Activated CD8-positive, alpha-beta memory T cell treated with anti-CD3 and anti-CD28 coated beads, Interleukin-2, amount 10 ng/mL, durations not matched to agents 7 days and 5 days (primary cell): ENCODE measurements at regions of chr12 and their contacts with region 1.

Region 1: GRCh38 chr12:30847259-30847658 is 79.3 kb upstream of the TSPAN11 start:
- DNase-seq: no peak
- ATAC-seq: peak; percentile 45
- H3K4me3 Mint-ChIP-seq: no peak overlapping the region
- H3K27ac Mint-ChIP-seq: no peak overlapping the region
- H3K4me1 Mint-ChIP-seq: peaks cover 6% of the 10 kb centered on the region
- H3K27me3 Mint-ChIP-seq: peaks cover 2% of the 10 kb centered on the region

Region 2: GRCh38 chr12:30661210-30661609 is 186.0 kb before region 1 on chr12:
- CTCF ChIA-PET with region 1: no interaction called
- DNase-seq: no peak
- ATAC-seq: no peak
- H3K4me3 Mint-ChIP-seq: no peak overlapping the region
- H3K27ac Mint-ChIP-seq: no peak overlapping the region
- H3K4me1 Mint-ChIP-seq: no peaks in the 10 kb centered on the region
- H3K27me3 Mint-ChIP-seq: no peaks in the 10 kb centered on the region

Region 3: DNA sequence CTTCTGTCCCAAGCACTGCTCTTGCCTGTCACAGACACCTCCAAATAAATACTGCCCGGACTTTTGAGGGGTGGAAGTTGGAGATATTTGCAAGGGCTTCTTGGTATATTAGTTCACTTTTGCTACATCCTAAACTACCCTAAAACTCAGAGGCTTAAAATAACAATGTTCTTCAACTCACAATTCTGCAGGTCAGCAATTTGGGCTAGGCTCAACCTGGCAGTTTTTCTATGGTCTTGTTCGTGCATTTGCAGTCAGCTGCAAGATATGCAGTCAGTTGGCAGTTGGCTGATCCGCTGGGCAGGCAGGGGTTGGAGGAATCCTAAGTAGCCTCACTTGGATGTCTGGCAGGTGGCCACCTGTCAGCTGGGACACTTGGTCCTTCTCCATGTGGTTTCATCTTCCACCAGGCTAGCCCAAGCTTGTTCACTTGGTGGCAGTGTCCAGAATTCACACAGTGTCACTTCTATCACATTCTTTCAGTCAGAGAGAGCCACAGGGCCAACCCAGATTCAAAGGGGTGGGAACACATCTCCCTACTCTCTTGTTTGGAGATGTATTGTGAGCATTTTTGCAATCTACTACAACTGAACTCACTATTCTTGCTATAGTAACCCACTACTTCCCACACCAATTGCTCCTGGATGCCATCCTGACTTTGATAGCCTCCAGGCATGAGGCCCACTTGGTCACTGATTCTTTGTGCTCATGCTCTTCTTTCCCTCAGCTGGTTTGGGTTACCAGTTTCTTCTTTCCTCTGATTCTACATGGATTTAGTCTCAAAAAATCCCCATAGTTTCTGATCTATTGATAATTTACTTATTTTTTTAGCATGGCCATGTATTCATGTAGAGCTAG is 64.7 kb before region 1 on chr12:
- CTCF ChIA-PET with region 1: no interaction called
- DNase-seq: no peak
- ATAC-seq: no peak
- H3K4me3 Mint-ChIP-seq: no peak overlapping the region
- H3K27ac Mint-ChIP-seq: no peak overlapping the region
- H3K4me1 Mint-ChIP-seq: no peaks in the 10 kb centered on the region
- H3K27me3 Mint-ChIP-seq: peaks cover 21% of the 10 kb centered on the region

Region 4: GRCh38 chr12:30985814-30986452 is 138.7 kb after region 1 on chr12:
- CTCF ChIA-PET with region 1: interaction called, 33 read pairs
- DNase-seq: peak; percentile 42
- ATAC-seq: peak; percentile 56
- H3K4me3 Mint-ChIP-seq: no peak overlapping the region
- H3K27ac Mint-ChIP-seq: no peak overlapping the region
- H3K4me1 Mint-ChIP-seq: peaks cover 2% of the 10 kb centered on the region
- H3K27me3 Mint-ChIP-seq: no peaks in the 10 kb centered on the region

Region 5: DNA sequence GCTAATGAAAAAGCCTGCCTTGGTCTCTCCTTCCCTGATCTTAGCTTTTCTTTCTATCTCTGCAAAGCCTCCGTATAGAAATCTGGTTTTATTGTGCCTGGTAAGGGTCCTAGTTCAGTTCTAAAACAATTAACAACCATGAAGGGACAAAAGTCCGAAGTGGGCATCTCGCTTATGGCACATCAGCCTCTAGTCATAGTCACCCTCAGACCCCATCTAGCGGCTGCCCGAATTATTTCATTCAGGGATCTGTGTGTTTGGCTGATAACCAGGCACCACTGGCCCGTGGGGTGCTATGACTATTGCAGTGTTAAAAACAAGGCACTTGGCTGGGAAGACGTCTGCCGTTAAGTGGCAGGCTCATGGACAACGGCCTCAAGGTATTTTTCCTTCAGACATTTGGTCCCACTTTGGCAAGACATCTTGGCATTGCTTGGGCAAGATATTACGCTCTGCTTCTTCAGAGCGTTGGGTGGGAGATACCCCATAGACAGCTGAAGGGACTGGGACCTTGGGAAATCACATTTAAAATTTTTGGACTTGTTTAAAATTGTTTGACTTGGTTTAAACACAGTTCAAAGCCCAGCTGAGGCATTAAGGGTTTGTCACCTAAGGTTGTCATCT is 391.6 kb after region 1 on chr12:
- CTCF ChIA-PET with region 1: interaction called, 23 read pairs
- DNase-seq: peak; percentile 73
- ATAC-seq: peak; percentile 86
- H3K4me3 Mint-ChIP-seq: no peak overlapping the region
- H3K27ac Mint-ChIP-seq: no peak overlapping the region
- H3K4me1 Mint-ChIP-seq: peaks cover 13% of the 10 kb centered on the region
- H3K27me3 Mint-ChIP-seq: peaks cover 34% of the 10 kb centered on the region

Region 6: DNA sequence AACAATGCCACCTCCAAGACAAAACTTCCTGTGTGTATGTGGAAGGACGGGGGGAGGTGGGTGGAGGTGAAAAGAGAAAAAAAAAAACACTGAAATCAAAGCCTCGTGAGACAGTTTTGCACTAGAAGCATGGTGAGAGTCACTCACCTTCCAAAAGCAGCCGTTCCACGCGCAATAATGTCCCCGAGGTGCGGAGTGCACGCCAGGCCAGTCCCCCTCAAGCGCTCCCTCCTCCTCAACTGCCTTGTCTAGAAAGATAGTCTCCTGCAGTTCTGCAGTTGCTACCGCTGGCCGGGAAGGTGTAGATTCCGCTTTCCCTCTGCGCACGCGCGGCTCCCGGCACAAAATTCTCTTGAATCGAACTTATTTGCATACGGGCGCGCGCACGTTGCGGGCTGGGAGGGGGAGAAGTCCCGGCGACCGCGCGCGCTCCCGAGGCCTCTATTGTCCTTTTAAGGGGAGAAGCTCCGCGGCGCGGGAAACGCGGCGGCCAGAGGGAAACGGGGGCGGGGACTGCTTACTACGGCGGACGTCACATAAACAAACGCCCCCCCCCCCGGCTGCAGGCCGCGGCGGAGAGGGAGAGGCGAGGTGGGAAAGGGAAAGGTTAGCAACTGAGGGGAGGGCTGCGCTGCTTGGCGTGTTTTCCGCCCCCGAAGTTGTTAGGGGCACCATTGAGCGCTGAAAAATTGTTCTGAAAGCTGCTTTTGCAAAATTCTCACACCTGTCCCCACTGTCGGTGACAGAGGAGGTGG is 478.8 kb after region 1 on chr12 and contains the start of gene SINHCAF:
- CTCF ChIA-PET with region 1: no interaction called
- DNase-seq: peak; percentile 99
- ATAC-seq: peak; percentile 64
- H3K4me3 Mint-ChIP-seq: peak within 1 kb of the TSS; percentile 99
- H3K27ac Mint-ChIP-seq: peak within 1 kb of the TSS; percentile 100
- H3K4me1 Mint-ChIP-seq: peaks cover 28% of the 10 kb centered on the region
- H3K27me3 Mint-ChIP-seq: peaks cover 3% of the 10 kb centered on the region
- total RNA-seq, gene SINHCAF: 78.5 to 120 TPM